PC-9 (cell line): ENCODE measurements at regions of chr13 and their contacts with region 1.

Region 1: DNA sequence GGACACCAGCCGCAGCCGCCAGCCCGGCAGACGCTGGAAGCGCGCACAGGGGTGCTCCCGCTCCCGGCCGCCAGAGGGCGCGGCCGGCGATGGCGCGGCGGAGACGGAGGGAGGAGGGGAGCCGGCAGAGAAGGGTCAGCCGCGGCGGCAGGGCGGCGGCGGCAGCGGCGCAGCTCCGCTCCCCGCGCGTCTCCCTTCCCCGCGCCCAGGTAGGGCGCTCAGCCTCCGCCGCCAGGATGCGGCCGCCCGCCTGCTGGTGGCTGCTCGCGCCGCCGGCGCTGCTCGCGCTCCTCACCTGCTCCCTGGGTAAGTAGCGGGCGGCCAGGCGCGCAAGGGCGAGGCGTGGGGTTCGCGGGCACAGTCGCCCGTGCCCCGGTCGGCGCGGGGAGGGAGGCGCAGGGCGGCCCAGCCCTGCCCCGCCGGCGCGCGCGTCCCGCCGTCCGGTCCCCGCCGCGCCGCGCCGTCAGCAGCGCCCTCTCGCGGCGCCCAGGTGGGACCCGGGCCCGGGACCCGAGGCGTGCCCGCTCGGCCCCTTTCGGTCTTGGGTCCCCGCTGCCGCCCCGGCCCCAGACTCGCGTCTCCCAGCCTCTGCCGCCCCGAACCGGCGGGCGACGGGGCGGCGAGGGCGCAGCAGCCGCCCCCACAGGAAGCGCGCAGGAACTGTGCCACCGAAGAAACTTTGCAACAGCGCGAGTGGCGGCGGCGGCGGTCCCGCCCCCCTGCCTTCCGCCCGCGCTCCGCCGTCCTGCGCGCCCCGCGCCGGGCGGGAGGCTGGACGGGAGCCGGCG is at the start of gene B3GLCT:
- DNase-seq: peak; percentile 59 to 82
- H3K4me3 ChIP-seq: peak within 1 kb of the TSS; percentile 80
- H3K27ac ChIP-seq: peak within 1 kb of the TSS; percentile 39; the same call in 1 of the 2 replicates
- H3K4me1 ChIP-seq: peaks cover 25% of the 10 kb centered on the region
- H3K27me3 ChIP-seq: no peaks in the 10 kb centered on the region
- CTCF ChIP-seq: peak; percentile 62
- total RNA-seq, gene B3GLCT: 3.5 and 5.4 TPM in 2 replicates

Region 2: GRCh38 chr13:31131470-31131961 is 68.5 kb before region 1 on chr13:
- CTCF ChIA-PET with region 1: no interaction called
- POLR2A ChIA-PET with region 1: no interaction called
- intact Hi-C with region 1: no loop called
- DNase-seq: no peak
- H3K4me3 ChIP-seq: no peak overlapping the region
- H3K27ac ChIP-seq: no peak overlapping the region
- H3K4me1 ChIP-seq: no peaks in the 10 kb centered on the region
- H3K27me3 ChIP-seq: peaks cover 7% of the 10 kb centered on the region
- CTCF ChIP-seq: no peak

Region 3: GRCh38 chr13:31161828-31162590 is 38.0 kb before region 1 on chr13 and contains the start of gene HSPH1:
- CTCF ChIA-PET with region 1: no interaction called
- POLR2A ChIA-PET with region 1: interaction called, 4 read pairs
- intact Hi-C with region 1: loop called (anchors 1 kb)
- DNase-seq: peak; percentile 94 to 96
- H3K4me3 ChIP-seq: peak within 1 kb of the TSS; percentile 67
- H3K27ac ChIP-seq: peak within 1 kb of the TSS; percentile 58
- H3K4me1 ChIP-seq: peaks cover 40% of the 10 kb centered on the region
- H3K27me3 ChIP-seq: no peaks in the 10 kb centered on the region
- CTCF ChIP-seq: no peak
- total RNA-seq, gene HSPH1: 61.8 and 105 TPM in 2 replicates